ENCODE measurements at regions of chr17 and their contacts with region 1.

Region 1: DNA sequence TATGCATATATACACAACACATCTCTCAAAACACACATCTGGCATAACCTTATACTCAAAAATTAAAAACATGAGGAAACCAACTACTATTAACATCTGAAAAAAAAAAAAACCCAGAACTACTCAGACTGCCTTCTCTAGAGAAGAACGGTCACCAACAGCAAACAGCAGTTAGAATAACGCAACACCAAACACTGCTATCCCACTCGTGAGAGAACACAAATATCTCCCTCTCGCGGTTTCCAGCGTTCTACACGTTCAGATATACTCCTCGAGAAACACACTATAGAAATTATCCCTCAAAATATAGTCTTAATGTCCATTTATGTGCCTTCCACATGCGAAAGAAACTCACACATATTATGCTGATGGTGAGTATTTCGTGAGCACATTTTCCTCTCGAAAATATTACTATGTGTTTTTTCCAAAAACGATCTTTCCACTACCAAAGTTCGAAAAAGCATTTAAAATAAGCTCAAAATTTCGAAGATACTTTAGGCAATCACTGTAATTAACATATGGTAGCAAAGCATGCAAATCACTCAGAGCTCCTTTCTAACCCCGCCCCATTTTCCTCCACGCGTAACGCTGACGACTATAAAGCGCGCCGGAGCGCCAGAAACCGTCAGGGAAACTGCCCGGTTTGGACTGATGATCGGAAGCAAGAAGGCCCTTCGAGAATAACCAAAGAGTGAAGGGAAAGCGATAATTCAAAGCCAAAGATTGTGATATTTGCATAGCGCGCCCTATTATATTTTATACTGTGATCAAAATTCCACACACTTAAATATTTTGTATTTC is 60.1 kb downstream of the TEX14 start:
- DNase-seq: peak; percentile 98
- H3K4me3 ChIP-seq: peak overlapping the region; percentile 45 to 58 (median 52)
- H3K27ac ChIP-seq: peak overlapping the region; percentile 75 to 86 (median 82)
- H3K4me1 ChIP-seq: peaks cover 8 to 13% (median 12%) of the 10 kb centered on the region in 4 donors
- H3K27me3 ChIP-seq: no peaks in the 10 kb centered on the region
- CTCF ChIP-seq: peak in 2 of 3 experiments; percentile 21 to 28
- EP300 ChIP-seq: no peak
- POLR2A ChIP-seq: peak; percentile 98

Region 2: GRCh38 chr17:58692239-58693055 is 60.7 kb after region 1 on chr17 and contains the start of gene RAD51C:
- intact Hi-C with region 1: loop called (anchors 2 kb)
- DNase-seq: peak; percentile 93
- H3K4me3 ChIP-seq: peak within 1 kb of the TSS; percentile 65 to 75 (median 72)
- H3K27ac ChIP-seq: peak within 1 kb of the TSS; percentile 82 to 86 (median 84)
- H3K4me1 ChIP-seq: peaks cover 13 to 22% (median 15%) of the 10 kb centered on the region in 4 donors
- H3K27me3 ChIP-seq: no peaks in the 10 kb centered on the region
- CTCF ChIP-seq: no peak
- EP300 ChIP-seq: peak; percentile 36
- POLR2A ChIP-seq: peak; percentile 24
- total RNA-seq, gene RAD51C: 20.1 to 27.0 (median 21.4) TPM

Region 3: DNA sequence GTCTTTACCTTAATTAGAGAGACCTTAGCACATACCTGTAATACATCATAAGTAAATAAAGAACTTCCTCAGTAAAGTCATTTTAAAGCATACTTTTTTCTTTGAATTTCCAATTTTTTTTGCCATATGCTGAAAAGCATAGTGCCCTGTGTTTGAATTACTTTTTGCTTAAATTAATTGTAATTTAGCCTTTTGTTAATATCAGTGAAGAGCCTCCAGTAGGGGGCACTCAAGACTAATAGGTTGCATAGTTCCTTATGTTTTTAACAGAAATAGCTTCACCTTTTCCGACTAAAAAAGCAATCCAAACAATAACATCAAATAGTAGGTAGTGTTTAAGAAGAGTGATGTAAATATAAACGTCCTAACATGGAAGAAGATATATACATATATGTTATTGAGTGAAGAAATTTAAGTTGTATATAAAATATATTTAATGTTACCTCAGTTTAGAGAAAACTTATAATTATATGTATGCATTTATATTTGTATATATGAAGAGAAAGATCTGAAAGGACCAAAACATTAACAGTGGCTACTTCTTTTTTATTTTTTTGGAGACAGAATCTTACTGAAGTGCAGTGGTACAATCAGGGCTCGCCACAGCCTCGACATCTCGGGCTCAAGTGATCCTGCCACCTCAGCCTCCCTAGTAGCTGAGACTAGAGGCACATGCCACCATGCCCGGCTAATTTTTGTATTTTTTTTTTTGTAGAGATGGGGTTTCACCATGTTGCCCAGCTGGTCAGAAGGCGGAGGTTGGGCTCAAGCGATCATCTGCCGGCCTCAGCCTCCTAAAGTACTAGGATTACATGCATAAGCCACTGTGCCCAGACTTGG is 79.4 kb after region 1 on chr17:
- intact Hi-C with region 1: no loop called
- DNase-seq: no peak
- H3K4me3 ChIP-seq: no peak overlapping the region
- H3K27ac ChIP-seq: no peak overlapping the region
- H3K4me1 ChIP-seq: no peaks in the 10 kb centered on the region
- H3K27me3 ChIP-seq: no peaks in the 10 kb centered on the region
- CTCF ChIP-seq: peak; percentile 47 to 66 (median 57)
- EP300 ChIP-seq: no peak
- POLR2A ChIP-seq: no peak

Measured in esophagus muscularis mucosa (tissue), 4 donors.